Activated CD4-positive, alpha-beta T cell treated with anti-CD3 and anti-CD28 coated beads for 36 hours (primary cell): ENCODE measurements at regions of chr6 and their contacts with region 1.

Region 1: DNA sequence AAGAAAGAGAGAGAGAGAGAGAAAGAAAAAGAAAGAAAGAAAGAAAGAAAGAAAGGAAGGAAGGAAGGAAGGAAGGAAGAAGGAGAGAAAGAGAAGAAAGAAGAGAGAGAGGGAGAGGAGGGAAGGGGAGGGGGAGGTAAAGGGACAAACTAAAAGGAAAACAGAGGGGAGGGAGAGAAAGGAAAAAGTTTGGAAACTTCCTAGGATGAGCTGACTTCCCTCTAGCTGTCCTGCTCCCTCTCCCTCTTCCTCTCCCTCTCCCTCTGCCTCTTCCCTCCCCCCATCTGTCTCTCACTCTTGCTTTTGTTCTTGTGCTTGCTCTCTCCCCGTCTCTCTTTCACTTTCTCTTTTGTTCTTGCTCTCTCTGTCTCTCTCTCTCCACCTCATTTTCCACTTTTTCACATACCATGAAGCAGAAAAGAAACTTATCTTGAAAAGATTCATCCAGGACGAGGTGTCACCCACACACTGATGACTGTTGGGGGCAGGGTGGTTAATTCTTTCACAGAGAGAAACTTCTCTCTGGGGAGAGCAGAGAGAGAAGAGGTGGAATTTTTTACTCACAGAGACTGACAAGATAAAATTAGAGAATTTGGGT is 56.4 kb upstream of the DUSP22 start:
- DNase-seq: peak; percentile 87
- ATAC-seq: peak; percentile 90
- H3K4me3 Mint-ChIP-seq: peak overlapping the region; percentile 44
- H3K27ac Mint-ChIP-seq: peak overlapping the region; percentile 80
- H3K4me1 Mint-ChIP-seq: peaks cover 51% of the 10 kb centered on the region
- H3K27me3 Mint-ChIP-seq: no peaks in the 10 kb centered on the region

Region 2: DNA sequence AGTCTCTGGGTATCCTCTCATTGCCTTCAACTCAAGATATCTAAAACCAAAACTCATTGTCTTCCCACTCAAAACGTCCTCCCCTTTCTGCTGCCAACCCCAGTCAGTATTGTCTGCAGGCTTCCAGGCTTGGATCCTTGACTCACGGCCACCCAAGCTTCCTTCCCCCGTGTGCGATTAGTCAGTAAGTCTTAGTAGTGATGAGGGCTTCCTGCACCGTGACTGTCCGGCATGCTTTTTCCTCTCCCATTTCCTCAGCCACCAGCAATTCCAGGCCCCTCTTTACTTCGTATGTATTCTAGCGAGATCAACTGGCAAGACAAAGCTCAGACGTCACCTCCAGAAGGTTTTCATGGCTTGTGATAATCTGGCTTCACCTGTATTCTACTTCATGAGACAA is 32.2 kb before region 1 on chr6:
- CTCF ChIA-PET with region 1: no interaction called
- POLR2A ChIA-PET with region 1: no interaction called
- intact Hi-C with region 1: no loop called
- DNase-seq: no peak
- ATAC-seq: no peak
- H3K4me3 Mint-ChIP-seq: no peak overlapping the region
- H3K27ac Mint-ChIP-seq: no peak overlapping the region
- H3K4me1 Mint-ChIP-seq: peaks cover 7% of the 10 kb centered on the region
- H3K27me3 Mint-ChIP-seq: peaks cover 16% of the 10 kb centered on the region

Region 3: GRCh38 chr6:217048-217659 is 18.7 kb before region 1 on chr6:
- CTCF ChIA-PET with region 1: interaction called, 6 read pairs
- POLR2A ChIA-PET with region 1: interaction called, 4 read pairs
- intact Hi-C with region 1: loop called in 1 of 2 experiments (anchors 1 kb)
- DNase-seq: peak; percentile 68
- ATAC-seq: no peak
- H3K4me3 Mint-ChIP-seq: no peak overlapping the region
- H3K27ac Mint-ChIP-seq: peak overlapping the region; percentile 41
- H3K4me1 Mint-ChIP-seq: peaks cover 59% of the 10 kb centered on the region
- H3K27me3 Mint-ChIP-seq: peaks cover 11% of the 10 kb centered on the region

Region 4: DNA sequence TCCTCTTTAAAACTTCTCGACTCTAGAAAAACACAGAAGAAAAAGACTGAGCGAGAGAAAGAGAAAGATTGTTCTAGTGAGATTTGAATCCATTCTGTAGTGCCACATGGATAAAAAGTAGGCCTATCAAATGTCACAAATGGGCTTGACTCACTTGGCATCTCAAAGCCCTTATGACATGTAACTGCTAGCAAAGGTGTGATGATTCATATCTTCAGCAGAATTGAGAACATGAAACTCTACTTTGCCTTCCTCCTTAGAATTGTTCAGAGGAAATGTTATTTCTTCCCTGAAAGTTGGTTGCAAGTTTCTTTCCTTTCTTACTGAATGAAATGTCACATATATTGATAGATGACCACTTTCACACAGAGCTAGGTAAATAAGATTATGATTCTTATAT is 16.1 kb after region 1 on chr6:
- CTCF ChIA-PET with region 1: interaction called, 4 read pairs
- POLR2A ChIA-PET with region 1: no interaction called
- intact Hi-C with region 1: loop called (anchors 1 kb)
- DNase-seq: no peak
- ATAC-seq: peak; percentile 97
- H3K4me3 Mint-ChIP-seq: no peak overlapping the region
- H3K27ac Mint-ChIP-seq: peak overlapping the region; percentile 92
- H3K4me1 Mint-ChIP-seq: peaks cover 42% of the 10 kb centered on the region
- H3K27me3 Mint-ChIP-seq: no peaks in the 10 kb centered on the region

Region 5: GRCh38 chr6:273551-274058 is 37.7 kb after region 1 on chr6:
- CTCF ChIA-PET with region 1: no interaction called
- POLR2A ChIA-PET with region 1: interaction called, 4 read pairs
- intact Hi-C with region 1: loop called in 1 of 2 experiments (anchors 1 kb)
- DNase-seq: no peak
- ATAC-seq: no peak
- H3K4me3 Mint-ChIP-seq: no peak overlapping the region
- H3K27ac Mint-ChIP-seq: no peak overlapping the region
- H3K4me1 Mint-ChIP-seq: peaks cover 24% of the 10 kb centered on the region
- H3K27me3 Mint-ChIP-seq: no peaks in the 10 kb centered on the region